ENCODE measurements at regions of chr13 and their contacts with region 1.

Region 1: GRCh38 chr13:99057310-99057975 is 79.6 kb upstream of the DOCK9 start:
- DNase-seq: no peak
- ATAC-seq: peak; percentile 19
- H3K4me3 ChIP-seq: no peak overlapping the region
- H3K27ac ChIP-seq: no peak overlapping the region
- H3K4me1 ChIP-seq: peaks cover 17% of the 10 kb centered on the region
- H3K27me3 ChIP-seq: no peaks in the 10 kb centered on the region
- CTCF ChIP-seq: no peak

Region 2: DNA sequence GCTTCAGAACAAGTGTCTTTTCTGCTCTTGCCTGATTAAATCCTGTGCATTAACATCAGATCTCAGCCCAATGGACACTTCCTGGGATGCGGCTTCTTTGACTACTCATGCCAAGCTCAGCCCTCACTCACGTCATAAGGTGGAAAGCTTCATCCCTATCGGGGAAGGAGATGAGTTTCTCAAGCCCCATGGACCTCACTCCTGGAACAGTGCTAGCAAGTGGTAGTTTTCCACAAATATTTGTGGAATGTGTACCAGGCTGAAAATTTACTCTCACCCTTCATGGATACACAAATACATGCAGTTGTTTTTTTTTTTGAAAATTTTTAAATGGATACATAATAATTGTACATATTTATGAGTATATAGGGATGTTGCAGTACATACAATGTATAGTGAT is 949.1 kb before region 1 on chr13:
- intact Hi-C with region 1: no loop called
- DNase-seq: no peak
- ATAC-seq: no peak
- H3K4me3 ChIP-seq: no peak overlapping the region
- H3K27ac ChIP-seq: no peak overlapping the region
- H3K4me1 ChIP-seq: no peaks in the 10 kb centered on the region
- H3K27me3 ChIP-seq: no peaks in the 10 kb centered on the region
- CTCF ChIP-seq: no peak

Region 3: GRCh38 chr13:99028890-99029289 is 28.6 kb before region 1 on chr13:
- intact Hi-C with region 1: loop called (anchors 2 kb)
- DNase-seq: no peak
- ATAC-seq: peak; percentile 64
- H3K4me3 ChIP-seq: no peak overlapping the region
- H3K27ac ChIP-seq: no peak overlapping the region
- H3K4me1 ChIP-seq: peaks cover 12% of the 10 kb centered on the region
- H3K27me3 ChIP-seq: no peaks in the 10 kb centered on the region
- CTCF ChIP-seq: peak; percentile 37